CD4-positive, alpha-beta memory T cell (primary cell): ENCODE measurements at regions of chr20 and their contacts with region 1.

Region 1: DNA sequence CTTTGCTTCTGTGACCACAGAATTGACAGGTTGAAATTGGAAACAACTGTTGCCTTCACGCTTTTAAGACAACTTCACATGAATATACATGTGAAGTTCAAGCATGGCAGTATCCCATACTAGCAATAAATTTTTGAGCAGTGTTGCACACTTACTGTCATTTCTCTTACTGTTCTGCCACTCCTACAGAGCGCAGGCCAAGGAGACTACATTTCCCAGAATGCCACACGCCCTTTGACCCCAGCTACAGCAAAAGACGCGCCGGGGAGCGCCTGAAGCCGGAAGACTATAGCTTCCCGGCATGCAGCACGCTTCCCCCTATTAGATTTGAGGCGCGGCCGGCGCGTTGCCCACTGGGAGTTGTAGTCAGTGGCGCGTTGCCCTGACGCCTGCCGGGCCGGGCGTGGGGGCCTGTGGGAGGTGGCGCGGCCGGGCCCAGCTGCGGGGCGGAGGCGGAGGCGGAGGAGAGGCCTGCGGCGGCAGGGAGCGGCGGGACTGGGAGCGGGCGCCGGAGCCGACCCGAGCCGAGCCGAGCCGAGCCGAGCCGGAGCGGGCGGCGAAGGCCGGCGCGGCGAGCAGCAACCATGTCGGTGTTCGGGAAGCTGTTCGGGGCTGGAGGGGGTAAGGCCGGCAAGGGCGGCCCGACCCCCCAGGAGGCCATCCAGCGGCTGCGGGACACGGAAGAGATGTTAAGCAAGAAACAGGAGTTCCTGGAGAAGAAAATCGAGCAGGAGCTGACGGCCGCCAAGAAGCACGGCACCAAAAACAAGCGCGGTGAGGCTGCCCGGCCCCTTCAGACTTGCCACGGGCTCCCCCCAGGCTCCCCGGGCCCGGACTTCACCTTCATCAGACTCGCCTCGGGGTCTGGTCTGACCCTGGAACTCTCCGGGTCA is at the start of gene CHMP4B:
- DNase-seq: peak; percentile 97 to 99 (median 98)
- H3K4me3 ChIP-seq: peak within 1 kb of the TSS; percentile 71 to 85
- H3K4me3 Mint-ChIP-seq: peak within 1 kb of the TSS; percentile 93 to 99 (median 97)
- H3K27ac ChIP-seq: peak within 1 kb of the TSS; percentile 88
- H3K27ac Mint-ChIP-seq: peak within 1 kb of the TSS; percentile 86 to 99 (median 95)
- H3K4me1 ChIP-seq: peaks cover 38% of the 10 kb centered on the region
- H3K4me1 Mint-ChIP-seq: peaks cover 35 to 52% (median 38%) of the 10 kb centered on the region in 4 donors
- H3K27me3 ChIP-seq: no peaks in the 10 kb centered on the region
- H3K27me3 Mint-ChIP-seq: peaks cover 0 to 2% of the 10 kb centered on the region in 2 donors
- total RNA-seq, gene CHMP4B: 53.0 to 54.0 TPM

Region 2: GRCh38 chr20:33443512-33444239 is 367.5 kb before region 1 on chr20 and contains the start of gene SNTA1:
- CTCF ChIA-PET with region 1: no interaction called
- POLR2A ChIA-PET with region 1: interaction called, 3 read pairs
- intact Hi-C with region 1: loop called (anchors 1 kb)
- DNase-seq: peak; percentile 80 to 88 (median 81)
- H3K4me3 ChIP-seq: peak within 1 kb of the TSS; percentile 42 to 85
- H3K4me3 Mint-ChIP-seq: peak within 1 kb of the TSS; percentile 92 to 97 (median 92)
- H3K27ac ChIP-seq: peak within 1 kb of the TSS; percentile 74
- H3K27ac Mint-ChIP-seq: peak within 1 kb of the TSS; percentile 90 to 97 (median 94)
- H3K4me1 ChIP-seq: peaks cover 17% of the 10 kb centered on the region
- H3K4me1 Mint-ChIP-seq: peaks cover 14 to 28% (median 22%) of the 10 kb centered on the region in 4 donors
- H3K27me3 ChIP-seq: no peaks in the 10 kb centered on the region
- H3K27me3 Mint-ChIP-seq: no peaks in the 10 kb centered on the region
- total RNA-seq, gene SNTA1: 5.1 to 5.7 TPM

Region 3: GRCh38 chr20:33719989-33720709 is 91.0 kb before region 1 on chr20 and contains the start of gene PXMP4:
- CTCF ChIA-PET with region 1: no interaction called
- POLR2A ChIA-PET with region 1: interaction called, 3 read pairs
- intact Hi-C with region 1: loop called (anchors 1 kb)
- DNase-seq: peak; percentile 90 to 96 (median 94)
- H3K4me3 ChIP-seq: peak within 1 kb of the TSS; percentile 25 to 88
- H3K4me3 Mint-ChIP-seq: peak within 1 kb of the TSS; percentile 86 to 97 (median 90)
- H3K27ac ChIP-seq: peak within 1 kb of the TSS; percentile 67
- H3K27ac Mint-ChIP-seq: peak within 1 kb of the TSS; percentile 81 to 98 (median 92)
- H3K4me1 ChIP-seq: peaks cover 15% of the 10 kb centered on the region
- H3K4me1 Mint-ChIP-seq: peaks cover 18 to 40% (median 23%) of the 10 kb centered on the region in 4 donors
- H3K27me3 ChIP-seq: no peaks in the 10 kb centered on the region
- H3K27me3 Mint-ChIP-seq: no peaks in the 10 kb centered on the region
- total RNA-seq, gene PXMP4: 15.7 to 16.3 TPM

Region 4: GRCh38 chr20:33832103-33832804 is 21.1 kb after region 1 on chr20:
- CTCF ChIA-PET with region 1: no interaction called
- POLR2A ChIA-PET with region 1: no interaction called
- intact Hi-C with region 1: no loop called
- DNase-seq: no peak
- H3K4me3 ChIP-seq: no peak overlapping the region
- H3K4me3 Mint-ChIP-seq: no peak overlapping the region
- H3K27ac ChIP-seq: no peak overlapping the region
- H3K27ac Mint-ChIP-seq: no peak overlapping the region
- H3K4me1 ChIP-seq: peaks cover 47% of the 10 kb centered on the region
- H3K4me1 Mint-ChIP-seq: peaks cover 48 to 81% (median 64%) of the 10 kb centered on the region in 4 donors
- H3K27me3 ChIP-seq: no peaks in the 10 kb centered on the region
- H3K27me3 Mint-ChIP-seq: no peaks in the 10 kb centered on the region

Region 5: GRCh38 chr20:33915726-33916331 is 104.7 kb after region 1 on chr20:
- CTCF ChIA-PET with region 1: interaction called, 4 read pairs
- POLR2A ChIA-PET with region 1: interaction called, 5 read pairs
- intact Hi-C with region 1: loop called (anchors 10 kb)
- DNase-seq: peak in 4 of 5 donors; percentile 37 to 46 (median 42)
- H3K4me3 ChIP-seq: no peak overlapping the region
- H3K4me3 Mint-ChIP-seq: no peak overlapping the region
- H3K27ac ChIP-seq: no peak overlapping the region
- H3K27ac Mint-ChIP-seq: peak overlapping the region in 1 of 7 donors; percentile 48
- H3K4me1 ChIP-seq: peaks cover 12% of the 10 kb centered on the region
- H3K4me1 Mint-ChIP-seq: peaks cover 6 to 11% (median 8%) of the 10 kb centered on the region in 4 donors
- H3K27me3 ChIP-seq: no peaks in the 10 kb centered on the region
- H3K27me3 Mint-ChIP-seq: peaks cover 0 to 6% of the 10 kb centered on the region in 2 donors

Region 6: GRCh38 chr20:34111702-34112599 is 300.8 kb after region 1 on chr20 and contains the start of gene EIF2S2:
- CTCF ChIA-PET with region 1: interaction called, 4 read pairs
- POLR2A ChIA-PET with region 1: interaction called, 27 read pairs
- intact Hi-C with region 1: loop called (anchors 1 kb)
- DNase-seq: peak; percentile 93 to 97 (median 97)
- H3K4me3 ChIP-seq: peak within 1 kb of the TSS; percentile 92 to 94
- H3K4me3 Mint-ChIP-seq: peak within 1 kb of the TSS; percentile 90 to 99 (median 94)
- H3K27ac ChIP-seq: peak within 1 kb of the TSS; percentile 95
- H3K27ac Mint-ChIP-seq: peak within 1 kb of the TSS; percentile 91 to 99 (median 96)
- H3K4me1 ChIP-seq: peaks cover 47% of the 10 kb centered on the region
- H3K4me1 Mint-ChIP-seq: peaks cover 32 to 52% (median 40%) of the 10 kb centered on the region in 4 donors
- H3K27me3 ChIP-seq: no peaks in the 10 kb centered on the region
- H3K27me3 Mint-ChIP-seq: no peaks in the 10 kb centered on the region
- total RNA-seq, gene EIF2S2: 52.2 to 53.1 TPM